K562 (cell line): ENCODE measurements at regions of chr16 and their contacts with region 1.

Region 1: GRCh38 chr16:58000706-58001676 is at the start of gene USB1:
- DNase-seq: peak; percentile 93 to 96 (median 95)
- ATAC-seq: peak; percentile 94
- H3K4me3 ChIP-seq: peak within 1 kb of the TSS; percentile 94
- H3K27ac ChIP-seq: peak within 1 kb of the TSS; percentile 71
- H3K4me1 ChIP-seq: peaks cover 21 to 31% of the 10 kb centered on the region in 2 experiments; a peak in 4 of 5 replicates
- H3K27me3 ChIP-seq: no peaks in the 10 kb centered on the region
- CTCF ChIP-seq: peak; percentile 60 to 85 (median 79); a peak in 5 of 6 replicates
- EP300 ChIP-seq: no peak
- POLR2A ChIP-seq: peak; percentile 88
- RAD21 ChIP-seq: peak; percentile 71 to 76
- polyA plus RNA-seq, gene USB1: 11.6 to 12.1 TPM

Region 2: DNA sequence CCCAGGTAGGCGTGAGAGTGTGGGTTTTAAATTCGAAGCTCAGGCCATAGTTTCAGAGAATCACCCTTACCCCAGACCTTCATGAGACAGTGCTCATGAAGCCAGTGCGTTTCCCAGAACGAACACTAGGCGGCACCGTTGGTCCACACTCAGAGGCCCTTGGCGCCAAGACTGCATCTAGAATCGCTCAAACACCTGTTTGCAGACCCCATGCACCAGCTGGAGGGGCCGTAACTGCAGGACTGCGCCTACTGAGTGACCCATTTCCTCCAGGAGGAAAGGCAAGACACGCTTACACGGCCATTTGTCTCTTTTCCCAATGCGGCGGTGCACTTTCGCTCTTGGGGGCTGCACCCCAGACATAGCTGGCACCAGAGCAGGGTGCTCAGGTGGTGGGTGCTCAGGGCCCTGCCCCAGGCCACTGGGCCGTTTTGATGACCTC is 424.5 kb before region 1 on chr16:
- CTCF ChIA-PET with region 1: interaction called, 5 read pairs
- POLR2A ChIA-PET with region 1: no interaction called
- in situ Hi-C with region 1: no loop called
- intact Hi-C with region 1: loop called (anchors 10 kb)
- DNase-seq: peak; percentile 71 to 84 (median 77)
- ATAC-seq: peak; percentile 94
- H3K4me3 ChIP-seq: no peak overlapping the region
- H3K27ac ChIP-seq: no peak overlapping the region
- H3K4me1 ChIP-seq: peaks cover 0 to 16% of the 10 kb centered on the region in 2 experiments; a peak in 3 of 5 replicates
- H3K27me3 ChIP-seq: peaks cover 5 to 46% of the 10 kb centered on the region in 2 experiments; a peak in 4 of 5 replicates
- CTCF ChIP-seq: peak; percentile 92 to 98 (median 94)
- EP300 ChIP-seq: no peak
- POLR2A ChIP-seq: no peak
- RAD21 ChIP-seq: peak; percentile 86 to 93

Region 3: DNA sequence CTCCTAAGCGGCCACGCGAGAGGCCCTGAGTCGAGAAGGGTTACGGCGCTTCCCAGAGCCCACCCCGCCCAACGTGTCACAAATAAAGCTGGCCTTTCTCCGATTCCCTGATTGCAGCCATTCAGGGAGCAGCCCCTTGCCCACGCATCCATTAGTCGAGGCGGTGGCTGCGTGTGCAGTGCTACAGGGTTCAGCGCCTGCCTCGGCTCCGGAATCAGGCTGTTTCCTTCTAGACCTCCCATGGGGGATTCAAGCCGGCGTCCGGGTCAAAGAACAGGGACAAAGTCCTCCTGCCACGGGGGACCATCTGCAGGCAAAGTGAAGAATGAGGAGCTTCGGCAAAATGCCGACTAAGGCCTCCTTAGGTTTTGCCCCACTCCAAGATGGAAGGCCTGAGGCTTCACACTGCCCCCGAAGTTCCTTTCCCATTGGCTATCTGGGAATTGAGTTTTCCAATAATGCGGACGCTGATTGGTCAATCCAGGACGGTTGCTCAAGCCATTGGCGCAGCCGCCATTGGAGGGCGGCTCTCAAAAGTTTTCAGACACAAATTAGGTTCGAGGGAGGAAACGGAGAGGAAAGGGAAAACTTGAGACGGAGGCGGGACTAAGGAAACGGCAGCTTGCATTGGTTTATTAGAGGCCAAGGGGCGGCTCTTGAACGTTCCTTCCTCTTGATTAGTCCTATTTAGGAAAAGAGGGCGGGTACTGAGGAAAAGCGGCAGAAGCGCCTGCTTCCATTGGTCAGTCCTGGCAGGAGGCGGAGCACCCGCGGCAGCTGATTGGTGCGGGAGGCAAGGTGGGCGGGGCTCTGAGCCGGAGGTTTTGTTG is 265.9 kb before region 1 on chr16:
- CTCF ChIA-PET with region 1: no interaction called
- POLR2A ChIA-PET with region 1: no interaction called
- in situ Hi-C with region 1: no loop called
- intact Hi-C with region 1: loop called (anchors 10 kb)
- DNase-seq: peak; percentile 98 to 100 (median 99)
- ATAC-seq: peak; percentile 94
- H3K4me3 ChIP-seq: peak overlapping the region; percentile 67
- H3K27ac ChIP-seq: peak overlapping the region; percentile 86
- H3K4me1 ChIP-seq: peaks cover 10 to 40% of the 10 kb centered on the region in 2 experiments; a peak in 3 of 5 replicates
- H3K27me3 ChIP-seq: no peaks in the 10 kb centered on the region
- CTCF ChIP-seq: no peak
- EP300 ChIP-seq: no peak
- POLR2A ChIP-seq: peak; percentile 86
- RAD21 ChIP-seq: no peak

Region 4: DNA sequence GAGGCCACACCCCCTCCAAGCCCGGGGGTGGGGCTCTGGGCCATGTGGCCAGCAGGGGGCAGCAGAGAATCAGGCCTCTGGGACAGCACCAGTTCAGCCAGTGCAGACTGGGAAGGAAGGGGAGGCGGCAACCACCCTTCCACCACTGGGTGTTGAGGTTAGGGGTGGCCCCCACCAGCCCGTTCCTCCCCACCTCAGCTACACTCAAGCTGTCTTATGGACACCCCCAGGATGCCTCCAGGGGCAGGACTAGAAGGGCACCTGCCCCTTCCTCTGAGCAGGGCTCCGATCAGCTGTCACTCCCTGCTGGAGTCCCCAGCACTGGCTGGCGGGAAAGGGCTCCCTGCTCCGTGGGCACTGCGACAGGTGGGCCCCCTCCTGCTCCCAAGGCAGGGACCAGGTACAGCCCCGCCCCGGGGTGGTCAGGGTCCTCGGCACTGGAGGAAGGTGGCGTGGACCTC is 243.6 kb before region 1 on chr16:
- CTCF ChIA-PET with region 1: interaction called, 5 read pairs
- POLR2A ChIA-PET with region 1: no interaction called
- in situ Hi-C with region 1: loop called (anchors 10 kb)
- intact Hi-C with region 1: loop called (anchors 2 kb)
- DNase-seq: peak; percentile 90 to 94 (median 94)
- ATAC-seq: peak; percentile 98
- H3K4me3 ChIP-seq: no peak overlapping the region
- H3K27ac ChIP-seq: 0 out of 3 replicates have a peak overlapping the region, but pooled peaks have one; percentile 20
- H3K4me1 ChIP-seq: peaks cover 0 to 60% of the 10 kb centered on the region in 2 experiments; a peak in 3 of 5 replicates
- H3K27me3 ChIP-seq: no peaks in the 10 kb centered on the region
- CTCF ChIP-seq: peak; percentile 94 to 97 (median 95)
- EP300 ChIP-seq: no peak
- POLR2A ChIP-seq: no peak; the same call in 1 of the 2 replicates
- RAD21 ChIP-seq: peak; percentile 89 to 91

Region 5: GRCh38 chr16:57916735-57917451 is 84.1 kb before region 1 on chr16:
- CTCF ChIA-PET with region 1: no interaction called
- POLR2A ChIA-PET with region 1: no interaction called
- in situ Hi-C with region 1: no loop called
- intact Hi-C with region 1: no loop called
- DNase-seq: no peak
- ATAC-seq: peak; percentile 34; the same call in 1 of the 3 replicates
- H3K4me3 ChIP-seq: no peak overlapping the region
- H3K27ac ChIP-seq: no peak overlapping the region
- H3K4me1 ChIP-seq: 0 out of 5 replicates have a peak, but pooled peaks cover 0 to 3% of the 10 kb centered on the region in 2 experiments
- H3K27me3 ChIP-seq: peaks cover 12 to 68% of the 10 kb centered on the region in 2 experiments; a peak in 4 of 5 replicates
- CTCF ChIP-seq: no peak
- EP300 ChIP-seq: no peak
- POLR2A ChIP-seq: no peak
- RAD21 ChIP-seq: no peak

Region 6: GRCh38 chr16:57945740-57946138 is 55.3 kb before region 1 on chr16:
- CTCF ChIA-PET with region 1: no interaction called
- POLR2A ChIA-PET with region 1: no interaction called
- in situ Hi-C with region 1: no loop called
- intact Hi-C with region 1: loop called (anchors 5 kb)
- DNase-seq: peak in 3 of 4 experiments; percentile 14 to 52 (median 42)
- ATAC-seq: peak; percentile 67
- H3K4me3 ChIP-seq: no peak overlapping the region
- H3K27ac ChIP-seq: no peak overlapping the region
- H3K4me1 ChIP-seq: no peaks in the 10 kb centered on the region; a peak in 1 of 5 replicates
- H3K27me3 ChIP-seq: peaks cover 3 to 31% of the 10 kb centered on the region in 2 experiments; a peak in 2 of 5 replicates
- CTCF ChIP-seq: peak; percentile 39 to 48 (median 41)
- EP300 ChIP-seq: no peak
- POLR2A ChIP-seq: no peak
- RAD21 ChIP-seq: no peak